Endothelial cell of umbilical vein (primary cell): ENCODE measurements at regions of chr5 and their contacts with region 1.

Region 1: DNA sequence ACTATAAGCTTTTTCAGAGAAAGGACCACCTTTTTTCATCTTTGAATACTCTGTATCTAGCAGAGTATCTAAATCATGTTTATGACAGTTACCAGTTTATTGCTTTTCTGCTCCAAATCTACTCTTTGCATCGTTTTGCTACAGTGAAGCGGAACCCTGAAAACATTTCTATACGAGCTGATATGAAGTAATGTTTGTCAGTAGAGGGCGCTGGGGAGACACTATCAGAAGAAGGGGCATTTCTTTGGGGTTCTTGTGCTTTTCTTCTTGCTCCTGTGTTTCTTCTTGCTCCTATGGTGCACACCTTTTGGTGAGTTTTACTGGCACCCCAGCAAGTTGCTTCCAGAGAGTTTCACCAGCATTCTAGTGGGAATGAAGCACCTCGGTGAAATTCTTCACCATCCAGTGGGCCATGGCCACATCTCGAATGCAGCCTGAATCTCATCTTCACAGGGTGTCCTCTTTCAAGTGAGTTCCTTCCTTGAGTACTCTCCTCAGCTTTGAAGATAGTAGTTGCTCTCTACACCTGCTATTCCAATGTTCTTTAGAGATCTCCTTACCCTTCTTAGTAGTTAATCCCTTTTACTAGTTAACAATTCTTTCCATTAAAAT is 98.4 kb downstream of the FGF1 start:
- DNase-seq: peak; percentile 49
- H3K4me3 ChIP-seq: no peak overlapping the region
- H3K27ac ChIP-seq: no peak overlapping the region
- H3K4me1 ChIP-seq: no peaks in the 10 kb centered on the region
- H3K27me3 ChIP-seq: peaks cover 6 to 18% of the 10 kb centered on the region in 2 experiments
- CTCF ChIP-seq: peak; percentile 49 to 59
- POLR2A ChIP-seq: no peak

Region 2: DNA sequence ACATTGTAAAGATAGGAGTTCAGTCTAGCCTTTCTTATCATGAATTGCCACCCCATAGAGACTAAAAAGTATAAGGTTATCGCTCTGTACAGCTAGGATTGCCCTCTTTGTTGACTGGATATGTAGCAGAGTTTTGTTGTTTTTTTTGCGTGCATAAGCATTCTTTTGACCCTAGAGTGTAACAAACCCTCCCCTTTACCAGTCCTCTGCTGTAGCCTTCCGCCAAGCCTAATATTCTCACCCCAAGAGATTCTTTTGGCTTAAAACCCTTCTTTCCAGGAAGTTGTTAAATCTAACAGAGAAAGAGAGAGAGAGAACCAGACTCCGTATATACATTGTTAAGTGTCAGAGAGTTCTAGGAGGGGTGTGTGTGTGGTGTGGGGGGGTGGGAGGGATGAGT is 15.5 kb before region 1 on chr5:
- CTCF ChIA-PET with region 1: interaction called, 14 read pairs
- POLR2A ChIA-PET with region 1: no interaction called
- dilution Hi-C with region 1: no loop called
- intact Hi-C with region 1: no loop called
- DNase-seq: no peak
- H3K4me3 ChIP-seq: no peak overlapping the region
- H3K27ac ChIP-seq: no peak overlapping the region
- H3K4me1 ChIP-seq: no peaks in the 10 kb centered on the region
- H3K27me3 ChIP-seq: peaks cover 0 to 2% of the 10 kb centered on the region in 2 experiments
- CTCF ChIP-seq: no peak
- POLR2A ChIP-seq: no peak

Region 3: DNA sequence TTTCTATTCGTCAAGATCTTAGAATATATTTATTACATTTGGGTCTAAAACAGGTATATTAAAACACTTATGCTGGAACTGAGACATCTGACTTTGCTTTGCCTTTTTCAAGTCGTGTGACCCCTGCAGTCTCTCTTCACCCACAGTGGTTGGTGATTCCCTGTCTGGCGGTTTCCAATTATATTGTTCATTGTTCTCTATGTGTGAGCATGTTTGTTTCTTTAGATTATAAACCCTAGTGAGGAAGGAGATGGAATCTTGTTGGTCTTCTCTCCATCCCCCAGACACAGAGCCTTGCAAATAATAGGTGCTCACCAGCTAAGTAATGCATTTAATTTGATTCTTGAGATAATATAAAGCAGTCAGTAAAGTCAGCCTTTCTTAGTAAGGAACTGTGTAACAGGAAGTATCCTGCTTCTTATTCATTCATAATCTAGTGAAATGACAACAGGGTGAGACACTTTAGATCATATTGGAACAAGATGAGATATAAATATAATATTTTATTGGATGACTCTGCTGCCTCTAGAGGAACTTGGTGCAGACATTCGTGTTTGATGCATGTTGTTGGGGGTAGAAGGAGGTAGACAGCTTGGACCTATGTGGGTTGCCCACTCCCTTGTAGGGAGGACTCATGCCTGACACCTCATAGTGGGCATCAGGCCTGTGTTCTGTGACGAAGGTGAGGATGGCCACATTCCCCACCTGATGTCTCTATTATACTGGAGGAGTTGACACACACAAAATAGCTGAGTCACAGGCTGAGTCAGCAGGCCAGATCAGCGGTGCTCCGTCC is 10.3 kb after region 1 on chr5:
- CTCF ChIA-PET with region 1: interaction called, 21 read pairs
- POLR2A ChIA-PET with region 1: no interaction called
- dilution Hi-C with region 1: no loop called
- intact Hi-C with region 1: no loop called
- DNase-seq: peak; percentile 81
- H3K4me3 ChIP-seq: no peak overlapping the region
- H3K27ac ChIP-seq: no peak overlapping the region
- H3K4me1 ChIP-seq: peaks cover 26% of the 10 kb centered on the region
- H3K27me3 ChIP-seq: no peaks in the 10 kb centered on the region
- CTCF ChIP-seq: no peak
- POLR2A ChIP-seq: no peak

Region 4: DNA sequence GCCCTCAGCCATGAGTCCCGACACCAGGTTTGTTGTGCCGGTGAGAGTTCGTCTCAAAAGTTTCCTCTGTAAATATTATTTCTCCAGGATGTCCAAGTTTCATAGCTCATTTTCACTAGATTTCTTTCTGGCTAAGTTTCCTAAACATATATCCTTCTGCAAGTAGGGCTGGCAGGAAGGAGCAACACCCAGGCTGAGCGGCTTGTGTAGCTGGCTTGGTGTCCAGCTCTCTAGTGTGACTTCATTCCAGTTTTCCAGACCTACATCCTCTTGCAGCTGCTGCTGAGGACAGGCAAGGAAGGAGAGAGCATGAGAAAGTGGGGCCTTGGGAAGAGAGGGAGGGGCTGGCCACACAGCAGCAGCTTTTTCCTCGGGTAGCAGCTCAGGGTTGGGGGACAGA is 18.2 kb after region 1 on chr5:
- CTCF ChIA-PET with region 1: interaction called, 21 read pairs
- POLR2A ChIA-PET with region 1: no interaction called
- dilution Hi-C with region 1: no loop called
- intact Hi-C with region 1: no loop called
- DNase-seq: peak; percentile 31
- H3K4me3 ChIP-seq: no peak overlapping the region
- H3K27ac ChIP-seq: no peak overlapping the region
- H3K4me1 ChIP-seq: peaks cover 11% of the 10 kb centered on the region
- H3K27me3 ChIP-seq: peaks cover 2 to 24% of the 10 kb centered on the region in 2 experiments
- CTCF ChIP-seq: no peak
- POLR2A ChIP-seq: no peak